Left ventricle myocardium inferior (tissue), 1 donor: ENCODE measurements at regions of chr10 and their contacts with region 1.

Region 1: DNA sequence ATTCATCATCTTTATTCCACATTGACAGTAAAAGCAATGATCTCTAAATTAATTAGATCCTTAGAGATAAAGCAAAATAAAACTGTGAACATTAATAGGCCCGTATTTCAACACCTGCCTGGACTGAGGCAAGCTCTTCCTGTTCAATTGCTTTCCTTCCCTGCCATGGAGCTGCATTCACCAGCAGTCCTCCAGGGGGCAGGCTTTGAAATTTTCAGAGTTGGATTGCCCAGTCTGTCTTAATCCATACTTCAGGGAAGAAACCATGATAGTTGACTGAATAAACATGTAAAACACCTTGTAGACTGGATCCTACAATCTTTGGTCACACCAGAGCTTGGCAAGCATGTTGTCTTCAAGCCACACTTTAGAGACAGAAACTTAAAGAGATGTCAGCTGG is 936.6 kb downstream of the NRG3 start:
- DNase-seq: no peak
- H3K4me3 ChIP-seq: no peak overlapping the region
- H3K27ac ChIP-seq: no peak overlapping the region
- H3K4me1 ChIP-seq: no peaks in the 10 kb centered on the region
- H3K27me3 ChIP-seq: no peaks in the 10 kb centered on the region
- CTCF ChIP-seq: peak; percentile 30

Region 2: GRCh38 chr10:82597840-82598239 is 213.8 kb before region 1 on chr10:
- intact Hi-C with region 1: no loop called
- DNase-seq: no peak
- H3K4me3 ChIP-seq: no peak overlapping the region
- H3K27ac ChIP-seq: no peak overlapping the region
- H3K4me1 ChIP-seq: no peaks in the 10 kb centered on the region
- H3K27me3 ChIP-seq: no peaks in the 10 kb centered on the region
- CTCF ChIP-seq: no peak

Region 3: DNA sequence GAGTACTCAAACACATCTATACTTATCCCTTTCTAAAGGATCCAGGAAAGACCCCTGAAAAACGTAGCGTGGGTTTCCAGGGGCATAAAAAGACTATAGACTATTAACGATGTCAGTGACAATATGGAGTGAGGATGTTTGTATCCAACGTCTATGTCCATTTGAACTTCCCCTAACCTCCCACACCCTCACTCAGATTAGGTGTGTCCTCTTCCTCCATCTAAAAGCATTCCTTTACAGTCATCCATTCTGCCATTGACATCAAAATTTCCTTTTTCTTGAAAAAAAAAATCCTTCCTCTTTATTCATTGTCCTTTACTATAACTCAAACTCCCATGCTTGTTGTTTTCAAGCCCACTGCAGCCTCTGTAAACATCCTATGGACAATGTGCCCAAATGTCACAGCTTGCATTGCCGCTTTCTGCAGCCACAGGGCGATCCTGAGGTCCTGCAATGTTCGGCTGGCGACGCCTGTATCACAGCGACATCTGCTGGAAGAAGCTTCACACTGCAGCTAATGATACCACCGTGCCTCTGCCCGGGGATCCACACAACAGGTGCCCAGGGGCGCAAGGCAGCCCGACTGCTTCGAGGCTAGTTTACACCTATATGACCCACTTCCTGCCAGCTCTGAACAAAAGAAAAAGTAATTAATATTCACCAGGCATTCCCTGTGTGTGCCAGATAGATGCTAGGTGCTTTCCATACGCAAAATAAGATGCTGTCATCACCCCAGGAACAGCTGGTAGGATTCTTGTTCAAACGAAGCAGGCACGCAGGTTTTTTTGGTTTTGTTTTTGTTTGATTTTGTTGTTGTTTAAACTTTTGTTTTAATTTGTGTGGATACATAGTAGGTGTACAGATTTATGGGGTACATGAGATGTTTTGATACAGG is 1059.8 kb after region 1 on chr10:
- intact Hi-C with region 1: loop called (anchors 10 kb)
- DNase-seq: peak; percentile 51
- H3K4me3 ChIP-seq: no peak overlapping the region
- H3K27ac ChIP-seq: no peak overlapping the region
- H3K4me1 ChIP-seq: no peaks in the 10 kb centered on the region
- H3K27me3 ChIP-seq: no peaks in the 10 kb centered on the region
- CTCF ChIP-seq: peak; percentile 96